ENCODE measurements at regions of chr12 and their contacts with region 1.

Region 1: GRCh38 chr12:54579696-54580333 is 8.6 kb downstream of the PPP1R1A start:
- DNase-seq: no peak
- H3K4me3 ChIP-seq: no peak overlapping the region
- H3K27me3 ChIP-seq: peaks cover 16% of the 10 kb centered on the region
- CTCF ChIP-seq: peak; percentile 99

Region 2: GRCh38 chr12:54359033-54359761 is 220.6 kb before region 1 on chr12:
- CTCF ChIA-PET with region 1: no interaction called
- POLR2A ChIA-PET with region 1: no interaction called
- DNase-seq: peak; percentile 93
- H3K4me3 ChIP-seq: peak overlapping the region; percentile 55
- H3K27me3 ChIP-seq: no peaks in the 10 kb centered on the region
- CTCF ChIP-seq: no peak

Region 3: DNA sequence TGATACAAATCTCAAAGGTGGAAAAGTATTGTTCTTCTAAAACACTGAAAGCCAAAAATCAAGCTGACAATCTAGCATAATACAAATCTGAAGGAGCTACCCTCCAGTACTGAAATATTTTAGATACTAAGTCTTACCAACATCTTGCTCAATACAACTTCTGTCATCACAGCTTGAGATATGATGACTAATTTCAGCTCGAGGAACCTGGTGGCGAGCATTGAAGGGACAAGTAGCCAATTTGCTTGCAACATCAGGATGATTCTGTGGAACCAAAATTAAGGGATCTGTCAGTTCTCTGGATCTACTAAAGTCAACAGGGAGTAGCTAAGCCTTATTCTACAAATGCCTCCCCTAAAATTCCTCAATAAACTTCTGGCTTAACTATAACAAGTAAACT is 116.8 kb before region 1 on chr12:
- CTCF ChIA-PET with region 1: no interaction called
- POLR2A ChIA-PET with region 1: no interaction called
- DNase-seq: peak; percentile 44
- H3K4me3 ChIP-seq: no peak overlapping the region
- H3K27me3 ChIP-seq: peaks cover 16% of the 10 kb centered on the region
- CTCF ChIP-seq: no peak

Region 4: GRCh38 chr12:54526812-54527630 is 52.8 kb before region 1 on chr12:
- CTCF ChIA-PET with region 1: interaction called, 21 read pairs
- POLR2A ChIA-PET with region 1: no interaction called
- DNase-seq: no peak
- H3K4me3 ChIP-seq: no peak overlapping the region
- H3K27me3 ChIP-seq: peaks cover 12% of the 10 kb centered on the region
- CTCF ChIP-seq: peak; percentile 49

Region 5: DNA sequence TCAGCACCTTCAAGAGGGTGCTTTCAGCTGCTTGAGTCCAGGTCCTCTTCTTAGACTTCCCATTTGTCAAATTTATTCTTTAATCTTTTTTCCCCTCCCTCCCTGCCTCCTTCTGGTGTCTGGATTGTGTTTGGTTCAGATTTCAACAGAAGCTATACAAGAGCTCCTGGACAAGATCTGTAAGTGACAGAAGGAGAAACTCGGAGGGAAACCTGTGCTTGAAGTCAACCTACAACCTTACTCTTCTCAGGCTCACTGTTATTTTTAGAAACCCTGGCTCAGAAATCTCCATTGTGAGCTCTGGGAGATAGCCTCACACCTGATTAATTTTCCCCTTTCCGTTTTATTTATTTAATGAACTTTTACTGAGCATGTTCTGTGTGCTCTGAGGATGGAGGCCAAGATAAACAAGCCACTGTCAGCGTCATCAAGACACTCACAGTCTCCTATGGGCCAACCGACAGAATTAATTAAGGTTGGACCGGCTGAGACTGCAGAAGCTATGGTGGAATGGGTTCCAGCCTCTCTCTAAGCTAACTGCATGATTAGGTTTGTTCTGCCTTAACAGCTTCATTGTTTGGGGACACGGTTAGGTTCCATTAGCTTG is 17.0 kb before region 1 on chr12:
- CTCF ChIA-PET with region 1: interaction called, 52 read pairs
- POLR2A ChIA-PET with region 1: no interaction called
- DNase-seq: no peak
- H3K4me3 ChIP-seq: no peak overlapping the region
- H3K27me3 ChIP-seq: peaks cover 6% of the 10 kb centered on the region
- CTCF ChIP-seq: no peak

Region 6: GRCh38 chr12:54596526-54596946 is 16.7 kb after region 1 on chr12:
- CTCF ChIA-PET with region 1: interaction called, 59 read pairs
- POLR2A ChIA-PET with region 1: no interaction called
- DNase-seq: no peak
- H3K4me3 ChIP-seq: no peak overlapping the region
- H3K27me3 ChIP-seq: peaks cover 3% of the 10 kb centered on the region
- CTCF ChIP-seq: peak; percentile 92

Region 7: GRCh38 chr12:54605138-54605970 is 25.5 kb after region 1 on chr12:
- CTCF ChIA-PET with region 1: interaction called, 59 read pairs
- POLR2A ChIA-PET with region 1: no interaction called
- DNase-seq: no peak
- H3K4me3 ChIP-seq: no peak overlapping the region
- H3K27me3 ChIP-seq: peaks cover 1% of the 10 kb centered on the region
- CTCF ChIP-seq: no peak

Measured in BJ (cell line).